T-cell (primary cell): ENCODE measurements at regions of chr2 and their contacts with region 1.

Region 1: GRCh38 chr2:29000481-29000880 is 19.4 kb downstream of the TOGARAM2 start:
- DNase-seq: peak in 33 of 35 experiments; percentile 24 to 80 (median 57)
- ATAC-seq: peak; percentile 75 to 97 (median 85)
- H3K4me3 ChIP-seq: no peak overlapping the region
- H3K4me3 Mint-ChIP-seq: peak overlapping the region in 1 of 3 donors; percentile 47
- H3K27ac ChIP-seq: peak overlapping the region; percentile 79
- H3K27ac Mint-ChIP-seq: peak overlapping the region; percentile 37 to 69
- H3K4me1 ChIP-seq: peaks cover 7 to 44% of the 10 kb centered on the region in 2 experiments
- H3K4me1 Mint-ChIP-seq: peaks cover 27 to 30% (median 28%) of the 10 kb centered on the region in 3 donors
- H3K27me3 ChIP-seq: no peaks in the 10 kb centered on the region
- H3K27me3 Mint-ChIP-seq: no peaks in the 10 kb centered on the region

Region 2: GRCh38 chr2:28976584-28976983 is 23.9 kb before region 1 on chr2:
- CTCF ChIA-PET with region 1: no interaction called
- POLR2A ChIA-PET with region 1: no interaction called
- DNase-seq: no peak
- ATAC-seq: no peak
- H3K4me3 ChIP-seq: no peak overlapping the region
- H3K4me3 Mint-ChIP-seq: no peak overlapping the region
- H3K27ac ChIP-seq: no peak overlapping the region
- H3K27ac Mint-ChIP-seq: no peak overlapping the region
- H3K4me1 ChIP-seq: peaks cover 0 to 8% of the 10 kb centered on the region in 2 experiments
- H3K4me1 Mint-ChIP-seq: peaks cover 4 to 15% (median 13%) of the 10 kb centered on the region in 3 donors
- H3K27me3 ChIP-seq: peaks cover 0 to 7% of the 10 kb centered on the region in 2 experiments
- H3K27me3 Mint-ChIP-seq: peaks cover 0 to 2% of the 10 kb centered on the region in 2 donors

Region 3: GRCh38 chr2:29014811-29015421 is 14.4 kb after region 1 on chr2:
- CTCF ChIA-PET with region 1: interaction called in 1 of 2 experiments, 28 read pairs
- POLR2A ChIA-PET with region 1: interaction called in 1 of 2 experiments, 14 read pairs
- DNase-seq: peak; percentile 62 to 85 (median 72)
- ATAC-seq: peak; percentile 68 to 84 (median 82)
- H3K4me3 ChIP-seq: peak overlapping the region in 1 of 2 donors; percentile 39
- H3K4me3 Mint-ChIP-seq: peak overlapping the region; percentile 68 to 80 (median 72)
- H3K27ac ChIP-seq: peak overlapping the region; percentile 96
- H3K27ac Mint-ChIP-seq: peak overlapping the region; percentile 98 to 100
- H3K4me1 ChIP-seq: peaks cover 62 to 84% of the 10 kb centered on the region in 2 experiments
- H3K4me1 Mint-ChIP-seq: peaks cover 70 to 77% (median 72%) of the 10 kb centered on the region in 3 donors
- H3K27me3 ChIP-seq: no peaks in the 10 kb centered on the region
- H3K27me3 Mint-ChIP-seq: no peaks in the 10 kb centered on the region